Activated CD8-positive, alpha-beta T cell treated with anti-CD3 and anti-CD28 coated beads for 36 hours (primary cell): ENCODE measurements at regions of chr1 and their contacts with region 1.

Region 1: DNA sequence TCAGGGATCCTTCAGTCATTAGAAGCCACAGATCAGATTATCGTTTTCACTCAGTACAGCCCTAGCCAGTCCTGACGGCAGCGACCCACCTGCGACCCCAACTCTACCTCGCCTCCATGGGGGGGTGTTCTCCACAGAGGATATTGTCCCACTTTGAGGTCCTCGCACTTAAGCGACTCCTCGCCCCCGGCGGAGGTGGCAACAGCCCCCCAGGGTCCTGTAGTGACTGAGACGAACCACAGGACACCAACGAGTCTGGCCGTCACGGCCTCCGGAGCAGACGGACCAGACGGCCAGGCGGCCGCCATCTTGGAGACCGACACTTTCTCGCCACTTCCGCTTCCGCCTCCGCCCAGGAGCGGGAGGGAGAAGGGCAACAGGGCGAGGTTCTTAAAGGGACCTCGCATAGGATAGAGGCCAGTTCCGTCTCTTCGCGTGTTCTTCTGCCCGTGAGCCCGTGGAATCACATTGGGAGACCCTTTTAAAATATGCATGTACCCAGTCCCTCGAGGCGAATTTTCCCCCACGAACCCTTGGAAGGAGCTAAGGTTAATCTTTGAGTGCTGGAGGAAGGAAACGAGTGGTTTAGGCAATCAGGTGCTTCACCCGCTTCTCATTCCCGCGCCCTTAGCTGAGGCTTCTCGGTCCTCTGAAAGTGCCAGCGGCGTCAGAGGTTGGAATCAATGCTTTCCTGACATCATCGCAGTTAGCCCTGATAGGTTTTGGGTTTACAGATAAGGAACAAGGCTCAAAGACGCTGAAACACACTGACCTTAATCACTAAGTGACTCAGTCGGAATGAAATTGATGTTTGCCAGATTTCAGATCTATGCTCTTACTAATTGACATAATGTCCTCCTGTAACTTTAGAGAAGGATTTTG is at the start of gene TM2D1:
- DNase-seq: peak; percentile 91
- ATAC-seq: peak; percentile 95
- H3K4me3 Mint-ChIP-seq: peak within 1 kb of the TSS; percentile 97
- H3K27ac Mint-ChIP-seq: peak within 1 kb of the TSS; percentile 100
- H3K4me1 Mint-ChIP-seq: peaks cover 17% of the 10 kb centered on the region
- H3K27me3 Mint-ChIP-seq: no peaks in the 10 kb centered on the region
- CTCF ChIP-seq: no peak
- total RNA-seq, gene TM2D1: 22.6 to 25.2 TPM

Region 2: GRCh38 chr1:61782771-61783170 is 57.7 kb after region 1 on chr1:
- CTCF ChIA-PET with region 1: no interaction called
- POLR2A ChIA-PET with region 1: interaction called, 3 read pairs
- intact Hi-C with region 1: loop called (anchors 2 kb)
- DNase-seq: peak; percentile 87
- ATAC-seq: peak; percentile 95
- H3K4me3 Mint-ChIP-seq: no peak overlapping the region
- H3K27ac Mint-ChIP-seq: peak overlapping the region; percentile 47
- H3K4me1 Mint-ChIP-seq: peaks cover 50% of the 10 kb centered on the region
- H3K27me3 Mint-ChIP-seq: no peaks in the 10 kb centered on the region
- CTCF ChIP-seq: no peak